Ovary (tissue), 10 donors: ENCODE measurements at regions of chr9 and their contacts with region 1.

Region 1: GRCh38 chr9:133184962-133185361 is 21.2 kb upstream of the GBGT1 start:
- DNase-seq: peak; percentile 47 to 75 (median 58)
- H3K4me3 ChIP-seq: no peak overlapping the region
- H3K27ac ChIP-seq: no peak overlapping the region
- H3K4me1 ChIP-seq: no peaks in the 10 kb centered on the region
- H3K27me3 ChIP-seq: no peaks in the 10 kb centered on the region
- CTCF ChIP-seq: peak in 2 of 3 donors; percentile 80 to 83
- EP300 ChIP-seq: no peak
- POLR2A ChIP-seq: no peak

Region 2: DNA sequence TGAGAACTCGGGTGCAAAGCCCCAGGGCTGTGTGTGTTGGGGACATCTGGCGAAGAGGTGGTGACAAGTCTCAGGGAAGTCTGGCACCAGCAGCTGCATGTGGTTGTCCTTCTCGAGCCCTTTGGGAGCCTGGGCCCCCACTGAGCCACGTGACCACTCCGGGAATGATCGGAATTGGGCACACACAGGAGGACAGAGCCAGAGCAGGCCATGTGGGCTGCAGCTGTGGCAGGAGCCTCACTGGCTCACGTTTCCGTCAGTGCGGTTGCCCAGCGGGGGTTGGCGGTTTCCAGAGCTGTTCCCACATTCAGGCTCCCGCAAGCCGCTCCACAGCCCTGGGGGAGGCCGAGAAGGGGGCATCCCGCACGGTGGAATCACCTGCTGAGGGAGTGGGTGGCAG is 130.0 kb before region 1 on chr9:
- intact Hi-C with region 1: no loop called
- DNase-seq: peak in 1 of 5 donors; percentile 36
- H3K4me3 ChIP-seq: no peak overlapping the region
- H3K27ac ChIP-seq: no peak overlapping the region
- H3K4me1 ChIP-seq: peaks cover 2% of the 10 kb centered on the region
- H3K27me3 ChIP-seq: no peaks in the 10 kb centered on the region
- CTCF ChIP-seq: no peak
- EP300 ChIP-seq: no peak
- POLR2A ChIP-seq: no peak

Region 3: GRCh38 chr9:133103183-133103986 is 81.6 kb before region 1 on chr9:
- intact Hi-C with region 1: no loop called
- DNase-seq: peak in 4 of 5 donors; percentile 50 to 79 (median 77)
- H3K4me3 ChIP-seq: no peak overlapping the region
- H3K27ac ChIP-seq: peak overlapping the region in 1 of 2 donors; percentile 55
- H3K4me1 ChIP-seq: no peaks in the 10 kb centered on the region
- H3K27me3 ChIP-seq: no peaks in the 10 kb centered on the region
- CTCF ChIP-seq: peak; percentile 92 to 98 (median 98)
- EP300 ChIP-seq: no peak
- POLR2A ChIP-seq: no peak

Region 4: DNA sequence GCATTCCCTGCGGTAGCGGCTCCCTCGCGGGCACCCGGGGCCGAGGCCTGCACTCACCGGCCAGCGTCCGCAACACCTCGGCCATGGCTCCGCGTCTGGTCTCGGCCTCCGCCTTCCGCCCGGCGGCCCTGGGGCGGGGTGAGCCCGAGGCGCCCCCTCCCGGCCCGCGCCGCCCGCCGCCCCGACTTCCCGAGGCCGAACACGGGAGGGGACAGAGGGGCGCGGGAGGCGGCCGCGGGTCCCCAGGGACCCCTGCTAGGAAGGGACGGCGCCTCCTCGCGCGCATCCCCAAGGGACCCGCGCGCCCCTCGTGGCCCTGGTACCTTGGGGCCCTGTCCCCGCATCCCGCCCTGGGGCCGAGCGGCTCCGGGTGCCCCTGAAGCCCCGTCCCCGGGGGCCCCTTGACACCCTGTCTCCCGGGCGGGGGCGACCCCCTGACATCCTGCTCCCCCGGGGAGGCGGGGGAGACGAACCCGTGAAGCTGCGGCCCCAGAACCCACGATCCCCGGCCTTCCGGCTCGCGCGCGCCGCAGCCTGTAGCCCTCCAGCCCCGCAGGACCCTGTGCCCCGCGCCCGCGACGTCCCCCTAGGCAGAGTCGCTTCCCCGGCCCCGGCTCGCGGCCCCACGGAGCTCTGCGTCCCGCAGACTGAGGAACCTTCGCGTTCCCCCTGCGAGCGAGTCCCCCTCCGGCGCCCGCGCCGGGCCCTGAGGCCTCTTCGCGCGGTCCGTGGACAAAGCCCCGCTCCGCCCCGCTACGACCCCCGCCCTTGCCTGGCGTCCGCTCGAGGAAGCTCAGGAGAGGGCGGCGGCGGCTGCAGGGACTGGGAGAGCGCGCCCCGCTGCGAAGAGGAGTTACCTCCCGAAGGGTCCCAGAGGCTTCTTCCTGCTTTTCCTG is 90.4 kb after region 1 on chr9 and contains the start of gene ABO:
- intact Hi-C with region 1: loop called in 3 of 4 experiments (anchors 5 to 10 kb)
- DNase-seq: peak; percentile 70 to 82 (median 77)
- H3K4me3 ChIP-seq: peak within 1 kb of the TSS; percentile 43
- H3K27ac ChIP-seq: peak within 1 kb of the TSS; percentile 93
- H3K4me1 ChIP-seq: peaks cover 8% of the 10 kb centered on the region
- H3K27me3 ChIP-seq: no peaks in the 10 kb centered on the region
- CTCF ChIP-seq: peak; percentile 25 to 77 (median 72)
- EP300 ChIP-seq: no peak
- POLR2A ChIP-seq: peak; percentile 26
- total RNA-seq, gene ABO: 16.0 to 27.7 (median 22.0) TPM

Region 5: GRCh38 chr9:133306242-133307204 is 121.6 kb after region 1 on chr9:
- intact Hi-C with region 1: no loop called
- DNase-seq: no peak
- H3K4me3 ChIP-seq: no peak overlapping the region
- H3K27ac ChIP-seq: no peak overlapping the region
- H3K4me1 ChIP-seq: no peaks in the 10 kb centered on the region
- H3K27me3 ChIP-seq: no peaks in the 10 kb centered on the region
- CTCF ChIP-seq: no peak
- EP300 ChIP-seq: no peak
- POLR2A ChIP-seq: no peak

Region 6: DNA sequence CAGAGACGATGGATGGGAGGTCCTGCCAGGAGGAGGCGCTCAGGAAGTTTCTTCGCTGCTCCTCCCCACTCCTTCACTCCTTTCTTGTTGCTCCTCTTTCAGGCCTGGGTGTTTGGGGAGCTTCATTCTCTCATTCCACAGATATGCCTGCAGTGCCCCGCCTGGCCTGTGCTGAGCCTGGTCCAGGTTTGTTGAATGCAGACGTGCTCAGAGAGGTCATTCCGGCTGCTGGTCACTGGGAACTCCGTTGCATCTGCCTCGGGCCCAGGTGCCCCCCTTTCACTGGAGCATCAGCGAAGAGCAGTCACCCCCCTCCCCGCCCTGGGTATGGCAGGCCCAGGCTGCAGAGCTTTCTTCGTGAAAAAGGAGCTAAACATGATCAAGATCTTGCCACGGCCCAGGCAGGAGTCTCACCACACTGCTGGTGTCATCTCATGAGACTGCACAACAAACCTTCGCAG is 135.5 kb after region 1 on chr9:
- intact Hi-C with region 1: loop called in 2 of 4 experiments (anchors 5 to 10 kb)
- DNase-seq: no peak
- H3K4me3 ChIP-seq: no peak overlapping the region
- H3K27ac ChIP-seq: no peak overlapping the region
- H3K4me1 ChIP-seq: no peaks in the 10 kb centered on the region
- H3K27me3 ChIP-seq: no peaks in the 10 kb centered on the region
- CTCF ChIP-seq: no peak
- EP300 ChIP-seq: no peak
- POLR2A ChIP-seq: no peak

Region 7: DNA sequence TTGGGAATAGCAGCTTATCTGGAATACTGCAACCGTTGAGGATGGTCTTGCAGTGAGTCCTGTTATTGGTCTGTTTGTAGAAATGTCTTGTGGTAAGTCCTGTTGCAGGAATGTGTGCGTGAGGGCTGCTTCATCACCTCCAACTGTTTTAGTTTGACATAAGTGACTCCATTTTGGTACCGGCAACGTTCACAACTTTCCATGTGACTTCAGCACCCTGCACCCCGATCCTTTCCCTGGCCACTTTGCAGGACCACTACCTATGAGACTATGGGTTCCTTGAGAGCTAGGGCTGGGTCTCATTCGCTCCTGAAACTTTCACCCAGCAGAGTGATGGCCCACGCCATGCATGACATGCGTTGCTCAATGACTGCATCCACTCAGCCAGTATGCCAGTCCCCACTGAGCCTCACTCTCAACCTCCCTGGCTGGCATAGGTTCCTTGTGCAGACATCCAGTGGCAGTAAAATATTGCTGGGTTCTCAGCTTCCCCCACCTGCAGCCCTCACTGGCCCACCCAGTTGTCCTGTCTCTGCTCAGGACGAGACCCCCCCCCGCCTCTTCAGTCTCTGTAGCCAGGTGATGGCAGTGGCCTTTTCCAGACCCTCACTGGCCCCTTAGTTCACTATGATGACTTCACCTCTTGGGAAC is 143.0 kb after region 1 on chr9:
- intact Hi-C with region 1: loop called (anchors 5 to 10 kb)
- DNase-seq: peak in 1 of 5 donors; percentile 22
- H3K4me3 ChIP-seq: no peak overlapping the region
- H3K27ac ChIP-seq: no peak overlapping the region
- H3K4me1 ChIP-seq: no peaks in the 10 kb centered on the region
- H3K27me3 ChIP-seq: no peaks in the 10 kb centered on the region
- CTCF ChIP-seq: no peak
- EP300 ChIP-seq: no peak
- POLR2A ChIP-seq: no peak

Region 8: GRCh38 chr9:133334161-133334560 is 149.2 kb after region 1 on chr9:
- intact Hi-C with region 1: loop called (anchors 5 to 10 kb)
- DNase-seq: peak in 1 of 5 donors; percentile 25
- H3K4me3 ChIP-seq: no peak overlapping the region
- H3K27ac ChIP-seq: no peak overlapping the region
- H3K4me1 ChIP-seq: peaks cover 5% of the 10 kb centered on the region
- H3K27me3 ChIP-seq: no peaks in the 10 kb centered on the region
- CTCF ChIP-seq: no peak
- EP300 ChIP-seq: no peak
- POLR2A ChIP-seq: no peak

Region 9: GRCh38 chr9:133485361-133486260 is 300.6 kb after region 1 on chr9:
- intact Hi-C with region 1: loop called (anchors 5 to 10 kb)
- DNase-seq: peak in 1 of 5 donors; percentile 32
- H3K4me3 ChIP-seq: no peak overlapping the region
- H3K27ac ChIP-seq: no peak overlapping the region
- H3K4me1 ChIP-seq: no peaks in the 10 kb centered on the region
- H3K27me3 ChIP-seq: no peaks in the 10 kb centered on the region
- CTCF ChIP-seq: no peak
- EP300 ChIP-seq: no peak
- POLR2A ChIP-seq: no peak

Region 10: GRCh38 chr9:133492061-133493021 is 307.4 kb after region 1 on chr9:
- intact Hi-C with region 1: loop called (anchors 5 to 10 kb)
- DNase-seq: peak in 1 of 5 donors; percentile 24
- H3K4me3 ChIP-seq: no peak overlapping the region
- H3K27ac ChIP-seq: peak overlapping the region in 1 of 2 donors; percentile 35
- H3K4me1 ChIP-seq: peaks cover 13% of the 10 kb centered on the region
- H3K27me3 ChIP-seq: no peaks in the 10 kb centered on the region
- CTCF ChIP-seq: no peak
- EP300 ChIP-seq: no peak
- POLR2A ChIP-seq: no peak